Naive thymus-derived CD8-positive, alpha-beta T cell (primary cell): ENCODE measurements at regions of chr17 and their contacts with region 1.

Region 1: GRCh38 chr17:17836250-17836817 is 452 bp downstream of the SREBF1 start:
- DNase-seq: peak; percentile 94 to 99 (median 98)
- ATAC-seq: peak; percentile 73 to 76
- H3K4me3 Mint-ChIP-seq: peak overlapping the region; percentile 87 to 96 (median 90)
- H3K27ac Mint-ChIP-seq: peak overlapping the region; percentile 85 to 99 (median 98)
- H3K4me1 Mint-ChIP-seq: peaks cover 37 to 83% (median 77%) of the 10 kb centered on the region in 4 donors
- H3K27me3 Mint-ChIP-seq: no peaks in the 10 kb centered on the region

Region 2: DNA sequence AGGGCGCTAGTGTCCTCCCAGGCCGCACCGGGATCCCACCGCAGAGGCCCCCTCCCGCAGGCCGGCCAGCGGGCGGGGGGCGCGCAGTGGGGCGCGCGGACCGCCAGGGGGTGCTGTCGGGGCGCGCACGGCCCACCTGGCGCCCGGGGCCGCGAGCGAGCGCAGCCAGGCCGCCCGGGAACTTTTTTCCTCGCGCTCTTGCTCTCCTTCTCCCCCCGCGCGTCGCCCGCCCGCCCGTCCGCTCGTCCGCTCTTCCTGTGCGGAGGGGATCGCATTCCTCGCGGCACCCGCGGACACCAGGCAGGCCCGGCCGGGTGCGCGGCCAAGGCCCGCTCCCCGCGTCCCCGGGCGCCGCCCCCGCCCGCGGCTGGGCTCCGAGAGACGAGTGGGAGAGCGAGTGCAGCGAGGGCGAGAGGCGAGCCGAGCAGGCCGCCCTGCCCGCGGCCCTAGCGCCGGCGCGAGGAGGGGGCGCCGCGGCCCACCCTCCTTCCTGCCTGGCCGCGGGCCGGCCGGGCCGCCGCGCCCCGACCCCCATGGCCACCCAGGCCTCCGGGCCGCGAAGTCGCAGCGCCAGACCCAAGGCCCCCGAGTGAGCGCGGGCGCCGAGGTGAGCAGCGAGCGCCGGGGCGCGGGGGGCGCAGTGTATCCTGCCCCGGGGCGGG is 155.0 kb before region 1 on chr17 and contains the start of gene RAI1:
- POLR2A ChIA-PET with region 1: interaction called, 10 read pairs
- DNase-seq: peak; percentile 59 to 87 (median 78)
- ATAC-seq: peak; percentile 61 to 63
- H3K4me3 Mint-ChIP-seq: peak within 1 kb of the TSS; percentile 70 to 93 (median 86)
- H3K27ac Mint-ChIP-seq: peak within 1 kb of the TSS in 8 of 10 donors; percentile 48 to 93 (median 88)
- H3K4me1 Mint-ChIP-seq: peaks cover 19 to 51% (median 43%) of the 10 kb centered on the region in 4 donors
- H3K27me3 Mint-ChIP-seq: no peaks in the 10 kb centered on the region
- polyA plus RNA-seq, gene RAI1: 1.5 to 4.0 (median 2.3) TPM

Region 3: DNA sequence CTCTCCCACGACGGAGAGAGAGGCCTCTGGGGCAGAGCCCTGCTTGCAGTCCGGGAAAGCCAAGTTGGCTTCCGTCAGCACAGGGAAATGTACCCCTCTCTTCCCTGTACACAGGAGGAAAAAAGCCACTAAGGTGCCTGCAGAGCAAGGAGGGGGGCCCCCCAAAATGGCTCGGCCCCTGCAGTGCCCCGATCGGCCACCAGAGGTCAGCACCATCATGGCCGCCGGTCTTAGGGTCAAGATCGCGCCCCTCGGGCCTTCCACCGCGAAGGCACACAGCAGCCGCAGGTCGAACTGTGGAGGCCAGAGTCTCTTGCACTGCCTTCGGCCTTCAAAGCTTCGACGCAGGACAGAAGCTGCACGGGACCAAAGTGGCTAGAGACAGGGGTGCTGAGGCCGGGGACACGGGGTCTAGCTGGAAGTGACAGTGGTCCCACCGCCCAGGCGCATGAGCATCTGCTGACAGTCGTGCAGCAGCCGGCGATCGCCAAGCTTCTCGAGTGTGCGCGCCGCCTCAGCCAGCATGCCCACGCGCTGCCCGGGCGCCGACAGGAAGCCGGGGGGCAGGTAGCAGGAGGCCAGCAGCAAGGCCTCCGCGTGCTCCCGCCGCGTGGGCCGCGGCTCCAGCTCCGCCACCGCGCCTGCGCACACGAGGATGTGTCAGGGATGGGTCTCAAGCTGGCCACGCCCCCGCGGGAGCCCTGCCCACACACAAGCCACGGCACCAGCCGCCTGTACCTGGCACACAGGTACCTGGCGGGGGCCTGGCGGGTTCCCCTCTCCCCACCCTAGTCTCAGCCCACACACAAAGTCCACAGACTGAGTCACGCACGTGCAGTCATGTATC is 23.9 kb before region 1 on chr17:
- POLR2A ChIA-PET with region 1: interaction called, 16 read pairs
- DNase-seq: peak; percentile 58 to 82 (median 69)
- ATAC-seq: peak; percentile 57 to 73
- H3K4me3 Mint-ChIP-seq: peak overlapping the region in 1 of 10 donors; percentile 14
- H3K27ac Mint-ChIP-seq: peak overlapping the region in 8 of 10 donors; percentile 69 to 89 (median 81)
- H3K4me1 Mint-ChIP-seq: peaks cover 11 to 33% (median 23%) of the 10 kb centered on the region in 4 donors
- H3K27me3 Mint-ChIP-seq: no peaks in the 10 kb centered on the region

Region 4: GRCh38 chr17:17823433-17824118 is 12.8 kb before region 1 on chr17:
- POLR2A ChIA-PET with region 1: interaction called, 166 read pairs
- DNase-seq: peak; percentile 66 to 86 (median 80)
- ATAC-seq: peak; percentile 79 to 82
- H3K4me3 Mint-ChIP-seq: peak overlapping the region; percentile 75 to 88 (median 84)
- H3K27ac Mint-ChIP-seq: peak overlapping the region; percentile 73 to 98 (median 94)
- H3K4me1 Mint-ChIP-seq: peaks cover 56 to 96% (median 95%) of the 10 kb centered on the region in 4 donors
- H3K27me3 Mint-ChIP-seq: no peaks in the 10 kb centered on the region

Region 5: GRCh38 chr17:17849845-17850373 is 13.6 kb after region 1 on chr17:
- POLR2A ChIA-PET with region 1: interaction called, 152 read pairs
- DNase-seq: peak; percentile 45 to 85 (median 72)
- ATAC-seq: peak; percentile 58 to 72
- H3K4me3 Mint-ChIP-seq: peak overlapping the region; percentile 55 to 86 (median 77)
- H3K27ac Mint-ChIP-seq: peak overlapping the region; percentile 91 to 99 (median 96)
- H3K4me1 Mint-ChIP-seq: peaks cover 49 to 87% (median 70%) of the 10 kb centered on the region in 4 donors
- H3K27me3 Mint-ChIP-seq: no peaks in the 10 kb centered on the region

Region 6: DNA sequence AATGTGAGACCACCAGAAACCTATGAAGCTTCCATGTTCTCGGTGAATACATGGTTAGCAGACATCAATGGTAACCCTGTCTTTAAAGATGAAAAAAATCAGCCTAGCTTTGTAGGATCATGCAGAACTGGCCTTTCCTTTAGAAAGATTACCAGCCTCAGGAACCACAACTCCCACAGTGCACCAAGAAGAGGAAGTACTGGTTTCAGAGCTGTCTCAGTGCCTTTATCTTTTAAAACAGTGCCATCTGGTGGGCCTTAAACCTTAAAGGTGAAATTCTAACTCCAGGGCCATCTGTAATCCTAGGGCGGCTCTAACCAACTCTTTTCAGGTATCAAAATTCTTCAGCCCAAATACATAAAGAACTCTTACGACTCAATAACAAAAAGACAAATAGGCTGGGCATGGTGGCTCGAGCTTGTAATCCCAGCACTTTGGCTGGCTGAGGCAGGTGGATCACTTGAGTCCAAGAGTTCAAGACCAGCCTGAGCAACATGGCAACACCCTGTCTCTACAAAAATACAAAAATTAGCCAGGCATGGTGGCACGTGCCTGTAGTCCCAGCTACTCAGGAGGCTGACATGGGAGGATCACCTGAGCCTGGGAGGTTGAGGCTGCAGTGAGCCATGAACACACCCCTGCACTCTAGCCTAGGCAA is 197.2 kb after region 1 on chr17:
- POLR2A ChIA-PET with region 1: interaction called, 10 read pairs
- DNase-seq: peak in 9 of 10 donors; percentile 28 to 78 (median 65)
- ATAC-seq: peak; percentile 97 to 99
- H3K4me3 Mint-ChIP-seq: peak overlapping the region in 1 of 10 donors; percentile 2
- H3K27ac Mint-ChIP-seq: peak overlapping the region in 6 of 10 donors; percentile 8 to 81 (median 44)
- H3K4me1 Mint-ChIP-seq: peaks cover 21 to 42% (median 39%) of the 10 kb centered on the region in 4 donors
- H3K27me3 Mint-ChIP-seq: no peaks in the 10 kb centered on the region